ENCODE measurements at regions of chr4 and their contacts with region 1.

Region 1: DNA sequence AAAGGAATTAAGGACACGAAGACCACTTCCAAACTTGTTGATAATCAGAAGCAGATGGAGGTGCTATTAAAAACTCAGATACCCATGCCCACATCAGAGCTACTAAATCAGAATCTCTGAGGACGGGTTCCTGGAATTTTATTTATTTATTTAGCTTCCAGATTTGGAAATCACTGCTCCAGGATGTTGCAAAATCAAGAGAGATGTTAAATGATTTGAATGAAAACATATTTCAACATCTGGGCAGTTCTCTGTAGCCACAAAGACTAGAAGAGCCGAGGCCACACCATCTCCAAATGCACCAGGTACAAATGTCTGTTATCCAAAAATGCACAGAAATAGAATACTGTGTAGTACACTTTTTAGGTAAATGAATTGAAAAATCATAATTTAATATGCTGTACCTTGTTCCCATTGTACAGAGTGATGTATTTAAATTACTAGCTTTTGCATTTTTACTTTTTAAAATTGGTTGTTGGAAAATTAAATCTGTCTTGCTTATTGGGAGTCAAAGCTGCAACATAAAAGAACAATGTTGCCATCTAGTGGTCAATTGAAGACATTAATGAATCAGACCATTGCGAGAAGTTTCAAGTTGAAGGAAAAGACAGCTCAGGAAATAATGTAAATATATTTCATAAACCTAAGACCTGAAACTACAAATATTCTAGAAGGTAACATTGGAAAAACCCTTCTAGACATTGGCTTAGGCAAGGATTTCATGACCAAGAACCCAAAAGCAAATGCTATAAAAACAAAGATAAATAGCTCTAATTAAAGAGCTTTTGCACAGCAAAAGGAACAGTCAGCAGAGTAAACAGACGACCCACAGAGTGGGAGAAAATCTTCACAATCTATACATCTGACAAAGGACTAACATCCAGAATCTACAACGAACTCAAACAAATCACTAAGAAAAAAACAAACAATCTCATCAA is 151.3 kb upstream of the TTC29 start:
- DNase-seq: no peak
- H3K4me3 ChIP-seq: no peak overlapping the region
- H3K27ac ChIP-seq: no peak overlapping the region
- H3K4me1 ChIP-seq: no peaks in the 10 kb centered on the region
- H3K27me3 ChIP-seq: no peaks in the 10 kb centered on the region
- CTCF ChIP-seq: peak; percentile 41 to 72 (median 64)
- EP300 ChIP-seq: no peak
- POLR2A ChIP-seq: no peak

Region 2: DNA sequence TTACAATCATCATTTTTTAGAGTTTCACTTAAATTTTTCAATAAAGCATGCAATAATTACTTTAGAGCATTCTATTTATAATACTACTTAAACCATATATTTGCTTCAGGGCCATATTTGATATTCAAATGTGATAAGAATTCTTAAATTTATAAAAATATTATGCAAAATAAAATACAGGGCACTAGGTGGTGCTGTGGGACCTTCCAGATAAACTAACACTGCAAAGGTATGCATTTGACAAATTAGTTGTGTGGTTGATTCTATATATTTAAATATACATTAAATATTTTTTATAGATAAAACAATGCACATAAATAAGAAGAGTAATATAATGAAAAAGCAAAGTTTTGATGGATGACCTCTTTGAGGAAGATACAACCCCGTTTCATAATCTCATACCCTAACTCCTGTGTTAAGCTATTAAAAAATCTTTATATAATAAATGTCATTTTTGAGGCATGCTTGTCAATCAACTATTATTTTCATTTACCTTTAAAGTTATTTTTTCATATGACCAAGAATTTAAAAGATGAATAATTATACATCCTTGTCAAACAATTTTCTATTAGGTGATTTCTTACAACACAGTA is 754.2 kb before region 1 on chr4:
- intact Hi-C with region 1: loop called (anchors 10 kb)
- DNase-seq: no peak
- H3K4me3 ChIP-seq: no peak overlapping the region
- H3K27ac ChIP-seq: no peak overlapping the region
- H3K4me1 ChIP-seq: no peaks in the 10 kb centered on the region
- H3K27me3 ChIP-seq: no peaks in the 10 kb centered on the region
- CTCF ChIP-seq: peak in 3 of 4 experiments; percentile 15 to 50 (median 19)
- EP300 ChIP-seq: no peak
- POLR2A ChIP-seq: no peak

Region 3: GRCh38 chr4:146932111-146932510 is 164.8 kb before region 1 on chr4:
- intact Hi-C with region 1: no loop called
- DNase-seq: no peak
- H3K4me3 ChIP-seq: no peak overlapping the region
- H3K27ac ChIP-seq: no peak overlapping the region
- H3K4me1 ChIP-seq: no peaks in the 10 kb centered on the region
- H3K27me3 ChIP-seq: no peaks in the 10 kb centered on the region
- CTCF ChIP-seq: no peak
- EP300 ChIP-seq: no peak
- POLR2A ChIP-seq: no peak

Region 4: DNA sequence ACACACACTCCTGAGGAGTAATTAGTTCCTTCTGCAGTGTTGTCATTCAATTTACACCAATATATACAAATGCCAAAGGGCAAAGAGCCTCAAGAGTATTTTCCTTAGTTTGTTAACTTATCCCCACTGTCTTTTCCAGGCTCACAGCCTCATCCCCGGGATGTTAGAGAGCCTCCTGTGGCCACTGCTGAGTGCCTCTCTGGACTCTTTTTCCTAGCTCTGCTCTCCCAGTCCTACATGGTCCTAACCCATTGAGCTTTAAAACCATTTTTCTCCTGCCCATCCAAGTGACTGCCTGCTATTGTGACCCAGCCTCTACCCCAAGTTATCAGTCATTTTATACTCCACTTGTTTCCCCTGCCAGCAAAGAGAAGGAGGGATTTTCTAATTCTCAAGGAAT is 127.8 kb before region 1 on chr4:
- intact Hi-C with region 1: no loop called
- DNase-seq: no peak
- H3K4me3 ChIP-seq: no peak overlapping the region
- H3K27ac ChIP-seq: no peak overlapping the region
- H3K4me1 ChIP-seq: no peaks in the 10 kb centered on the region
- H3K27me3 ChIP-seq: no peaks in the 10 kb centered on the region
- CTCF ChIP-seq: no peak
- EP300 ChIP-seq: no peak
- POLR2A ChIP-seq: no peak

Region 5: DNA sequence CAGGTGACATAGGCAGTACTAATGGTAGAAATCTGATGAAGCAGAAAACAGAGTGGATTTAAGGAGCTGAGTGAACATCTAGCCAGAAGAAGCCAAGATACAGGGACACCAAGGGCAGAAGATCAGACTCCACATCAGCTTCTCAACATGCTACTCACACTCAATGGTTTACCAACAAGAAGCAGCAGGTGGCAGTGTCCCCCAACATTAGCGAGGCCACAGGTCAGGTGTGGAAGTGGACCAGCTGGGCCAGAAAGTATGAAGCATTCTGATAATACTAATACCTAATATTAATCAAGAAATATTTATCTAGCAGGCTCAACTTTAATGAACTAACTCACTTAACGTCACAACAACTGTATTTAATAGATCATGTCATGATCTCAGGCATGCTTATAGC is 77.9 kb before region 1 on chr4:
- intact Hi-C with region 1: loop called (anchors 1 kb)
- DNase-seq: peak; percentile 71
- H3K4me3 ChIP-seq: no peak overlapping the region
- H3K27ac ChIP-seq: no peak overlapping the region
- H3K4me1 ChIP-seq: no peaks in the 10 kb centered on the region
- H3K27me3 ChIP-seq: no peaks in the 10 kb centered on the region
- CTCF ChIP-seq: peak; percentile 44 to 66 (median 60)
- EP300 ChIP-seq: no peak
- POLR2A ChIP-seq: no peak

Region 6: GRCh38 chr4:147037069-147037468 is 59.9 kb before region 1 on chr4:
- intact Hi-C with region 1: no loop called
- DNase-seq: no peak
- H3K4me3 ChIP-seq: no peak overlapping the region
- H3K27ac ChIP-seq: no peak overlapping the region
- H3K4me1 ChIP-seq: no peaks in the 10 kb centered on the region
- H3K27me3 ChIP-seq: no peaks in the 10 kb centered on the region
- CTCF ChIP-seq: no peak
- EP300 ChIP-seq: no peak
- POLR2A ChIP-seq: no peak

Measured in sigmoid colon (tissue), 7 donors.